Activated T-helper 1 cell treated with anti-CD3 and anti-CD28 coated beads, Interleukin-12 subunit alpha, Interleukin-12 subunit beta, Interleukin-2, Interleukin-4 antibody, amounts not matched to agents 30 ng/mL and 10 ng/mL and 1 ng/mL, durations not matched to agents 14 hours and 24 hours and 36 hours (primary cell): ENCODE measurements at regions of chr10 and their contacts with region 1.

Region 1: GRCh38 chr10:42866115-42866995 is 83.8 kb downstream of the BMS1 start:
- DNase-seq: peak; percentile 29
- H3K4me3 Mint-ChIP-seq: no peak overlapping the region
- H3K27ac Mint-ChIP-seq: no peak overlapping the region
- H3K4me1 Mint-ChIP-seq: no peaks in the 10 kb centered on the region
- H3K27me3 Mint-ChIP-seq: peaks cover 27% of the 10 kb centered on the region

Region 2: DNA sequence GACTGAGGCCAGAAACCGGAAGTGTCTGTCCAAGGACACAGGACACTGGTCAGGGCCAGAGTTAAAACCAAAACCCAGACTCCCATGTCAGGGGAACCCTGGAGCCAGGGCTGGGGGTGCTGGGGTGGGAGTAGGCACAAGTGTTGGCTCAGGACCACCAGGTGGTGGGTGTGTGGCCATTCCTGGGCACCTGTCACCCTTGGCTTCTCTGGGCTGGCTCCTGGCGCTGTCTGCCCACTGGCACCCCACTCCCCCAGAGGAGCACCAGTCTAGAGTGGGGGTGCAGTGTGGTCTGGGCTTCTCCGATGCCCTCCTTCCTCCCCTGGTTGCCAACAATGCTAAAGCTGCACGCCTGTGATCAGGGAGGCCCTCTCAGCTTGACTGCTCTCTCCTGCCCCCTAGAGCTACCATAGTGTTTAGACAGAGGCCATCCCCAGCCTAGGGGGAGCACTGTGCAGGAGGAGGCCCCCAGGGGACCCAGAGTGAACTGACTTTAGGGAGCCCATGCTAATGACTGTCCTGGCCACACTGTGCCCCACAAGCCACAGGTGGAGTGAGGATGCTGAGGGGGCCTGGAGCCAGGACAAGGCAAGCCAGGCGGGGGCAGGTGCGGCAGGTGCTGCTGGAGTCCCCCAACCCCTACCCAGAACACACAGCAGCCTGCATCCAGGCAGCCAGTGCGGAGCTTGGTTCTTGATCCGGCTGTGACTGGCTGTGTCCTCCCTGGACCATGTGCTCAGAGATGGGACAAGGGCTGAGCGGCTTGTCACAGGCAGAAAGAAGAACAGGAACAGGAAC is 389.5 kb after region 1 on chr10:
- intact Hi-C with region 1: loop called (anchors 10 kb)
- DNase-seq: no peak
- H3K4me3 Mint-ChIP-seq: no peak overlapping the region
- H3K27ac Mint-ChIP-seq: no peak overlapping the region
- H3K4me1 Mint-ChIP-seq: peaks cover 6% of the 10 kb centered on the region
- H3K27me3 Mint-ChIP-seq: peaks cover 5% of the 10 kb centered on the region